ENCODE measurements at regions of chr9 and their contacts with region 1.

Region 1: GRCh38 chr9:97982683-97983588 is at the start of gene ANP32B:
- DNase-seq: peak; percentile 95
- H3K4me3 Mint-ChIP-seq: peak within 1 kb of the TSS; percentile 82
- H3K27ac Mint-ChIP-seq: peak within 1 kb of the TSS; percentile 88
- H3K4me1 Mint-ChIP-seq: peaks cover 46% of the 10 kb centered on the region
- H3K27me3 Mint-ChIP-seq: no peaks in the 10 kb centered on the region
- total RNA-seq, gene ANP32B: 317 to 335 TPM

Region 2: DNA sequence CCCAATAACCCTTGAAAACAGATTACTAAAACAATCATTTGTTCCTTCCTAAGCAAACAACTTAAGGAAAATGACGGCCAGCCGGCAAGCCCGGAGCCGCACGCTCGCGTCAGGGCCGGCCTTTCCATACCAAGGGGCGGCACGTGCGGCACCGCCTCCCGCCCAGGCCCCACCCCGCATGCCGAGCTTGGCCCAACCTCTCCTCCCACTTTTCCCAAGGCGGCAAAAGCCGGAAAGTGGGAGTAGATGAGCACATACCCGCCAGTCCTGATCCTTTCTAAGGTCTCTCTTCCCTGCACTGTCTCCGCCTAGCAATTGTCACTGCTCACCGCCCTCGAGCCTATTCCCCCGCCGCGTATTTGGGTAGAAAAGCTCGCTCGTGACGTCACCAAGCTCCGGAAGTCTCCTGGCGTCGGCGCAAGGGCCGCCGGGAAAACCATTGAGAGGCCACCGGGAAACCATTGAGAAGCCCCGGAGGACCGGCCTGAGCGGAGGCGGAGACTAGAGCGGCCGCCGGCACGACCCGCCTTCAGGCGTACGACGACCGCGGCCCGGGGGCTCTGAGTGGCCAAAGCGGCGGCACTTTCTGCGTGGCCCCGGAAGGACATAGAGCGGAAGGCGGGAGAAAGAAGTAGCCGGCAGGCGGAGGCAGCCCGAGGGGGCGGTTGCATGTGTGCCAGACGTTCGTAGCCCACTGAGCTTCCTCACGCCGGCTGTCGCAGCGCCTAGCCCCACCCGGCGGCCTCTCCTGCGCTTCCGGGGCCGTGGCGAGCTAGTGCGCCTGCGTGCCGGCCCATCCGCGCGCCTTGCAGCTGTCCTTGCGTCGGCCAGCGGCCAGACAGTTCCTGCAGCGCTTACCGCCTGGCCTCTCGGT is 349.7 kb before region 1 on chr9 and contains the starts of genes NCBP1 and TSTD2:
- CTCF ChIA-PET with region 1: no interaction called
- POLR2A ChIA-PET with region 1: interaction called, 10 read pairs
- DNase-seq: peak; percentile 97
- H3K4me3 Mint-ChIP-seq: peak within 1 kb of the TSS; percentile 86
- H3K27ac Mint-ChIP-seq: peak within 1 kb of the TSS; percentile 97
- H3K4me1 Mint-ChIP-seq: peaks cover 49% of the 10 kb centered on the region
- H3K27me3 Mint-ChIP-seq: no peaks in the 10 kb centered on the region
- total RNA-seq, gene NCBP1: 34.5 to 36.5 TPM
- total RNA-seq, gene TSTD2: 10.5 to 12.2 TPM

Region 3: GRCh38 chr9:97906236-97906831 is 76.6 kb before region 1 on chr9:
- CTCF ChIA-PET with region 1: interaction called, 10 read pairs
- POLR2A ChIA-PET with region 1: interaction called, 12 read pairs
- DNase-seq: peak; percentile 66
- H3K4me3 Mint-ChIP-seq: peak overlapping the region; percentile 72
- H3K27ac Mint-ChIP-seq: peak overlapping the region; percentile 99
- H3K4me1 Mint-ChIP-seq: peaks cover 78% of the 10 kb centered on the region
- H3K27me3 Mint-ChIP-seq: no peaks in the 10 kb centered on the region

Region 4: DNA sequence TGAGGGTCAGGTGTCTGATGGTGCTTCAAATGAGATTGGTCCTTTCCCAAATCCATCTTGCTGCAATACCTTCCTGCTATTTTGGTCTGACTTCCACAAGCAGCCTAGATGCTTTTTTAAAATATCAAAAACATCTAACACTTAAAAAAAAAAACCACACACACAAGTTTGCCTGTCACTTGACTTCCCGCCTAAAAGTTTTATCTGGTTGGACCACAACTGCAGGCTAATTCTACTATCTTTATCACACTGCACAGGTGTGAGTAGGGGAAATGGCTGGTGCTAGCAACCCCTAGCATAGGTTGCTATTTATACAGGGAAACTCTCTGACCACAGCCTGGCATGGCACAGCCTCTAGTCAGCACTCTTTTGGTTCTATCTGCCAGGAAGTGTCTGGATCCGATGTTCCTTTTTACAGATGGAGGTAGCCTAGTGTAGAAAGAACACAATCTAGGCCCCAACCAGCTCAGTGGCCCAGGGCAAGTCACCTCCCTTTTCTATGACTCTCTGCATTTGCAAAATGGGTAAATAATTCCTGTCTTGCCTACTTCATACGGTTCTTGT is 44.8 kb before region 1 on chr9 and contains the start of gene HEMGN:
- CTCF ChIA-PET with region 1: no interaction called
- POLR2A ChIA-PET with region 1: interaction called, 16 read pairs
- DNase-seq: peak; percentile 49
- H3K4me3 Mint-ChIP-seq: no peak within 1 kb of the TSS
- H3K27ac Mint-ChIP-seq: peak within 1 kb of the TSS; percentile 47
- H3K4me1 Mint-ChIP-seq: peaks cover 17% of the 10 kb centered on the region
- H3K27me3 Mint-ChIP-seq: peaks cover 6% of the 10 kb centered on the region
- total RNA-seq, gene HEMGN: 0.53 to 0.83 TPM

Region 5: GRCh38 chr9:98010445-98010844 is 27.5 kb after region 1 on chr9:
- CTCF ChIA-PET with region 1: interaction called, 4 read pairs
- POLR2A ChIA-PET with region 1: interaction called, 168 read pairs
- DNase-seq: no peak
- H3K4me3 Mint-ChIP-seq: no peak overlapping the region
- H3K27ac Mint-ChIP-seq: no peak overlapping the region
- H3K4me1 Mint-ChIP-seq: peaks cover 33% of the 10 kb centered on the region
- H3K27me3 Mint-ChIP-seq: no peaks in the 10 kb centered on the region

Region 6: DNA sequence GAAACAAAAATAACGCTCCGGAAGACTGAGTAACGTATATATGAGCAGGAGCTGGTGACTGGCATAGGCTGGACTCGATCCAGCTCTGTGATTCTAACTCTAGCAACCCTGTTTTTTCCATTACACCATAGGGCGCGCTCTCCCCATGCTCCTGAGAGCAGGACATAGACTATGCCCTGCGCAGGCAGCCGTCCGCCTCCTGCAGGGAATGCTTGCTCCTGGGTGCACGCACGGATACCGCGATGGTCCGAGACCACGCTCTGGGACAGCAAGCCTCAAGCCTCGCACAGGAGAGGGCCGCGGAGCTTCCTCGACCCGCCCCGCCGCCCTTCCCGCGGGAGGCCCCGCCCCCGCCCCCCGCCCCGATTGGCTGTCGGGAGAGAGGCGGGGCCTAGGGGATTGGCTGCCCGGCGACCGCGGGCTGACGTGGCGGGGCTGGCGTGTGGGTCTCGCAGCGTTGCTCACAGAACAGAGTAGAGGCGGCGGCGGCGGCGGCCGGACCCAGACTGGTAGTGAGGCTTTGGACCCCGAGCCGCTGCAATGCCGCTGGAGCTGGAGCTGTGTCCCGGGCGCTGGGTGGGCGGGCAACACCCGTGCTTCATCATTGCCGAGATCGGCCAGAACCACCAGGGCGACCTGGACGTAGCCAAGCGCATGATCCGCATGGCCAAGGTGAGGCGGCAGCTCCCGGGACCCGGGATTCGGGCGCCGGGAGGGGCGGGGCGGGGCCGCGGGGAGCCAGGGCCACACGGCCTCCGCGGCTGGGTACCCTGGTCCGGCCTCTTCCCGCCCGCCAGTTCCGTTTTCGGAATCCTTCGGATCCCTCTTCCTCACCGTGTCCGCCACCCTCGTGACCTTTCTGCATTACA is 73.6 kb after region 1 on chr9 and contains the start of gene NANS:
- CTCF ChIA-PET with region 1: no interaction called
- POLR2A ChIA-PET with region 1: interaction called, 19 read pairs
- DNase-seq: peak; percentile 94
- H3K4me3 Mint-ChIP-seq: peak within 1 kb of the TSS; percentile 97
- H3K27ac Mint-ChIP-seq: peak within 1 kb of the TSS; percentile 92
- H3K4me1 Mint-ChIP-seq: peaks cover 37% of the 10 kb centered on the region
- H3K27me3 Mint-ChIP-seq: no peaks in the 10 kb centered on the region
- total RNA-seq, gene NANS: 46.1 to 47.3 TPM

Region 7: GRCh38 chr9:98255578-98256296 is 272.8 kb after region 1 on chr9 and contains the start of gene TBC1D2:
- CTCF ChIA-PET with region 1: no interaction called
- POLR2A ChIA-PET with region 1: interaction called, 46 read pairs
- DNase-seq: peak; percentile 98
- H3K4me3 Mint-ChIP-seq: peak within 1 kb of the TSS; percentile 93
- H3K27ac Mint-ChIP-seq: peak within 1 kb of the TSS; percentile 99
- H3K4me1 Mint-ChIP-seq: peaks cover 43% of the 10 kb centered on the region
- H3K27me3 Mint-ChIP-seq: no peaks in the 10 kb centered on the region
- total RNA-seq, gene TBC1D2: 11.0 to 11.9 TPM

Measured in activated CD4-positive, alpha-beta memory T cell treated with anti-CD3 and anti-CD28 coated beads, Interleukin-2, amount 10 ng/mL, durations not matched to agents 7 days and 5 days (primary cell).